HepG2 (cell line): ENCODE measurements at regions of chr9 and their contacts with region 1.

Region 1: DNA sequence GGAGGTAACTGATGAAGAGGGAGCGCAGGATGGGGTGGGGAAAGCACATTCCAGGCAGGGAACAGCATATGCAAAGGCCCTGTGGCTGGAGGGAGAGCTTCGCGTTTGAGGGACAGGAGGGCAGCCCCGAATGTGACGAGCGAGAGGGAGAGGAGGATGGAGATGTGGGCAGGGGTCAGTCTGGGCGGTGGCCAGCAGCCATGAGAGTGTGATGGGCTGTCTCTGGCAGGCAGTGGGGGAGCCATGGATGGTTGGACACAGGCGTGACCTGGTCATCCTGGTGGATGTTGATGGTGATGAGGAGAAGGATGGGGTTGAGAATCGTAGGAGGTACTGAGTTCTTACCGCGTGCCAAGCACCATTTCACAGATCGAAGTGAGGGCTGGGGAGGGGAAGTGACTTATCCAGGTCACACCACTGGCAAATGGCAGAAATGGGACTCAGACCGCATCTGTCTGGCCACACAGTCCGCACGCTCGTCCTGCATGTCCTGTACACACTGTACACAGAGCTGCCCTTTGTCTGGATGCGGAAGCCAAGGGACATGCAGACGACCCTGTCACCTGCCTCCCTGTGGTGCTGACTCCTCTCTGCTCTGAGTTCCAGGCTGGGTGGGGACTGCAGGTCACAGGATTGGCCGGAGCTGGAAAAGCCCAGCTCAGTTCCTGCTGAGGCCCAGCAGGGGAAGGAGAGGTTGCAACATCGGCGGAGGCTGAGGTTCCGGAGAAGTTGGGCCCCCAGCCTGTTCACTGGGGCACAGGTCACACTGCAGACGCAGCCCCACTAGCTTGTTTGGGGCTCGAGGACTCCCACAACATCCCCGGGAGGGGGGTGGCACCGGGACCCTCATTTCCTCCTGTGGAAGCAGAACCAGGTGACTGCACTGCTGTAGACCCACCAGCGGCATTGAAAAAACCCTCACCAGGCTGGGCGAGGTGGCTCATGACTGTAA is 165.6 kb upstream of the IER5L start:
- DNase-seq: peak; percentile 97
- ATAC-seq: peak; percentile 99
- H3K4me3 ChIP-seq: peak overlapping the region in 2 of 3 experiments; percentile 22 to 47; a peak in 3 of 6 replicates
- H3K27ac ChIP-seq: peak overlapping the region; percentile 91
- H3K4me1 ChIP-seq: peaks cover 86% of the 10 kb centered on the region
- H3K27me3 ChIP-seq: no peaks in the 10 kb centered on the region
- CTCF ChIP-seq: peak; percentile 67
- EP300 ChIP-seq: peak; percentile 52 to 94; a peak in 3 of 4 replicates
- POLR2A ChIP-seq: peak in 1 of 2 experiments; percentile 70; a peak in 1 of 4 replicates
- RAD21 ChIP-seq: peak; percentile 64; the same call in 1 of the 2 replicates

Region 2: GRCh38 chr9:129258124-129258822 is 85.4 kb before region 1 on chr9:
- CTCF ChIA-PET with region 1: no interaction called
- POLR2A ChIA-PET with region 1: interaction called, 3 read pairs
- in situ Hi-C with region 1: no loop called
- intact Hi-C with region 1: loop called (anchors 10 kb)
- DNase-seq: peak; percentile 61
- ATAC-seq: peak; percentile 72
- H3K4me3 ChIP-seq: no peak overlapping the region
- H3K27ac ChIP-seq: no peak overlapping the region
- H3K4me1 ChIP-seq: peaks cover 14% of the 10 kb centered on the region
- H3K27me3 ChIP-seq: peaks cover 4 to 79% of the 10 kb centered on the region in 2 experiments; a peak in 4 of 5 replicates
- CTCF ChIP-seq: no peak
- EP300 ChIP-seq: no peak
- POLR2A ChIP-seq: no peak
- RAD21 ChIP-seq: no peak

Region 3: GRCh38 chr9:129307227-129307970 is 36.3 kb before region 1 on chr9:
- CTCF ChIA-PET with region 1: no interaction called
- POLR2A ChIA-PET with region 1: no interaction called
- in situ Hi-C with region 1: no loop called
- intact Hi-C with region 1: loop called (anchors 5 kb)
- DNase-seq: peak; percentile 30
- ATAC-seq: no peak
- H3K4me3 ChIP-seq: no peak overlapping the region
- H3K27ac ChIP-seq: no peak overlapping the region
- H3K4me1 ChIP-seq: peaks cover 21% of the 10 kb centered on the region
- H3K27me3 ChIP-seq: peaks cover 2 to 23% of the 10 kb centered on the region in 2 experiments; a peak in 4 of 5 replicates
- CTCF ChIP-seq: no peak
- EP300 ChIP-seq: no peak
- POLR2A ChIP-seq: no peak
- RAD21 ChIP-seq: no peak

Region 4: DNA sequence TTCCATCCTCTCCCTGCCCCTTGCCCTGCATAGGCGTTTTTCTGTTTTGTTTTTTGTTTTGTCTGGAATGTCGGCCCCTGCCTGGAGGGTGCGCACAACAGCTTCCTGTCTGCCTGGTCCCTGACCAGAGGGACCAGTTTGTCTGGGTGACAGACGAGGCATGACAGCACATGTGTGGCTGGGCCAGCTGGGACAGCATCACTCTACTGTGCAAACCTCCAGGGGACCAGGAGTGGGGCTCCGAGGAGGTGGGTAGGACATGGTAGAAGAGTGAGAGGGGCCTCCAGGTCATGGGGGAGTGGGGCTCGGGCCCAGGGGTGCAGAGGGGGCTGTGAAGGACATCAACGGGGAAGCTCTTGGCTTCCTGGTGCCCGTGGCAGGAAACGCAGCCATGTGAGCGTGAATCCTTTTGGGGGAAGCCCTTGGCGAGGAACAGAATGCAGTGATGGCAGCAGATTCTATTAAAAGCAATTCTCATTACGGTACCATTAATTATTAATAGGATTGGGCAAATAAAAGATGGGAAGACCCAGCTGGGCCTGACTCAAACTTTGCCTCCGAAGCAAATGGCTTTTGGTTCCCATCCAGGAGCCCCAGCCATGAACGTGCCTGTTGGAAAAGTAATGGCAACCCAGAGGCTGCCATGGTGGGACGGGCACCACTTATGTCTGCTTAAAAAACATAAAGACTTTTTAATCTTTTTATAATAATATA is 18.7 kb after region 1 on chr9:
- CTCF ChIA-PET with region 1: no interaction called
- POLR2A ChIA-PET with region 1: no interaction called
- in situ Hi-C with region 1: no loop called
- intact Hi-C with region 1: no loop called
- DNase-seq: no peak
- ATAC-seq: peak; percentile 77
- H3K4me3 ChIP-seq: no peak overlapping the region
- H3K27ac ChIP-seq: no peak overlapping the region
- H3K4me1 ChIP-seq: peaks cover 28% of the 10 kb centered on the region
- H3K27me3 ChIP-seq: peaks cover 3 to 18% of the 10 kb centered on the region in 2 experiments; a peak in 3 of 5 replicates
- CTCF ChIP-seq: peak; percentile 53
- EP300 ChIP-seq: no peak
- POLR2A ChIP-seq: no peak
- RAD21 ChIP-seq: 0 out of 2 replicates have a peak, but pooled peaks have one; percentile 16

Region 5: DNA sequence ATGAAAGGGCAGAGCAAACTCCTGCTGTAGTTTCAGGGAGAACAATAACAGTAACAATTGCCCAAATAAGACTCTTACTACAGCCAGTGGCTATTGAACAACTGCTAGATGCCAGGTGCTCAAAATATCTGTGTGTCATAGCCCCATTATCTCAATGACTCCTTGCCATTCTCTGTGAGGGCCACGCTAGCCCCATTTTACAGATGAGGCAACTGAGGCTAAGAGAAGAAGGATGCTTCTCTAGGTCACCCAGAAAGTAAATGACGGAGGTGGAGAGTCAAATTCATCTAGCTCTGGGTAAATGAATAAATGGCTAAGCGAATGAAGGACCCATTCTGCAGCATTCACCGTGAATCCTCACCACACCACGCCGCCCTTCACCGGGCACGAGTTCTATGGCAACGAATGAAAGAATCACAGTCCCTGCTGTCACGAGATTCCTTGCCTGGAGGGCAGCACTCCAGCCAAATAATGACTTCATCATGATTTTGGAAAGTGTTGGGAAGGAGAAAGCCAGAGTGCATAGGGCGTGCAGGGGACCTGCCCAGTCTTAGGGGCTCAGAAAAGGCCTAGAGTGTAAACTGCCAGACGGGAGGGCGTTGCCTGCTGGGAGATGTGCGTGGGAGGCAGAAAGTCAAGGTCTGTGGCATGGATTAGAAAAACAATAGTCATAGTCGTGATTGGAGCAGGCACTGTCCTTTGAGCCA is 130.0 kb after region 1 on chr9:
- CTCF ChIA-PET with region 1: no interaction called
- POLR2A ChIA-PET with region 1: no interaction called
- in situ Hi-C with region 1: no loop called
- intact Hi-C with region 1: loop called (anchors 5 kb)
- DNase-seq: no peak
- ATAC-seq: no peak
- H3K4me3 ChIP-seq: no peak overlapping the region
- H3K27ac ChIP-seq: no peak overlapping the region
- H3K4me1 ChIP-seq: peaks cover 78% of the 10 kb centered on the region
- H3K27me3 ChIP-seq: 0 out of 5 replicates have a peak, but pooled peaks cover 0 to 4% of the 10 kb centered on the region in 2 experiments
- CTCF ChIP-seq: no peak
- EP300 ChIP-seq: no peak
- POLR2A ChIP-seq: no peak
- RAD21 ChIP-seq: no peak